ENCODE measurements at regions of chr16 and their contacts with region 1.

Region 1: GRCh38 chr16:48231727-48232492 is 12.2 kb upstream of the LONP2 start:
- DNase-seq: peak; percentile 72
- ATAC-seq: peak; percentile 83
- H3K4me3 Mint-ChIP-seq: peak overlapping the region; percentile 20
- H3K27ac Mint-ChIP-seq: peak overlapping the region; percentile 65
- H3K4me1 Mint-ChIP-seq: peaks cover 22% of the 10 kb centered on the region
- H3K27me3 Mint-ChIP-seq: peaks cover 5% of the 10 kb centered on the region

Region 2: DNA sequence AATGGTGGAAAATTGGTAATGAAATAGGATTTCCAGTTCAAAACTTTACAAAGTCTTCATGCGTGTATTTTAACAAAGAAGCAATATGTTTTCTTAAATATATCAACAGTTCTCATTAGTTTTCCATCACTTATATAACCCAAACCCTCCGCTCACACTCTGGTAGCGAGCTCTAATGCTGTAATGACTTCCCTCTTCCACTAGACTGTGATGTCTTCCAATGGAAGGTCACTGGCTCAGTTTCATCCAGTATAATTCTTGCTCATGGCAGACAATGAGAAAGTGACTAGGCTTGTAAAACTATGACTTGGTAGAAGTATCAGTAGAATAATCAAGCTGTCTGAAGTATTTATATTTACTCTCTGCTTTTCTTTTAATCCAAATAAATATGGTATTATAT is 1121.0 kb before region 1 on chr16:
- CTCF ChIA-PET with region 1: no interaction called
- POLR2A ChIA-PET with region 1: no interaction called
- intact Hi-C with region 1: loop called in 1 of 2 experiments (anchors 10 kb)
- DNase-seq: no peak
- ATAC-seq: no peak
- H3K4me3 Mint-ChIP-seq: no peak overlapping the region
- H3K27ac Mint-ChIP-seq: no peak overlapping the region
- H3K4me1 Mint-ChIP-seq: peaks cover 23% of the 10 kb centered on the region
- H3K27me3 Mint-ChIP-seq: peaks cover 3% of the 10 kb centered on the region

Region 3: GRCh38 chr16:48123104-48123788 is 108.7 kb before region 1 on chr16:
- CTCF ChIA-PET with region 1: no interaction called
- POLR2A ChIA-PET with region 1: no interaction called
- intact Hi-C with region 1: loop called in 1 of 2 experiments (anchors 5 kb)
- DNase-seq: peak; percentile 82
- ATAC-seq: peak; percentile 93
- H3K4me3 Mint-ChIP-seq: no peak overlapping the region
- H3K27ac Mint-ChIP-seq: no peak overlapping the region
- H3K4me1 Mint-ChIP-seq: peaks cover 20% of the 10 kb centered on the region
- H3K27me3 Mint-ChIP-seq: peaks cover 23% of the 10 kb centered on the region

Region 4: GRCh38 chr16:48168075-48168474 is 63.8 kb before region 1 on chr16:
- CTCF ChIA-PET with region 1: no interaction called
- POLR2A ChIA-PET with region 1: no interaction called
- intact Hi-C with region 1: no loop called
- DNase-seq: no peak
- ATAC-seq: no peak
- H3K4me3 Mint-ChIP-seq: no peak overlapping the region
- H3K27ac Mint-ChIP-seq: no peak overlapping the region
- H3K4me1 Mint-ChIP-seq: peaks cover 4% of the 10 kb centered on the region
- H3K27me3 Mint-ChIP-seq: peaks cover 8% of the 10 kb centered on the region

Region 5: GRCh38 chr16:48244080-48244862 is 12.4 kb after region 1 on chr16 and contains the start of gene LONP2:
- CTCF ChIA-PET with region 1: interaction called, 4 read pairs
- POLR2A ChIA-PET with region 1: no interaction called
- intact Hi-C with region 1: loop called in 1 of 2 experiments (anchors 1 kb)
- DNase-seq: peak; percentile 95
- ATAC-seq: peak; percentile 94
- H3K4me3 Mint-ChIP-seq: peak within 1 kb of the TSS; percentile 91
- H3K27ac Mint-ChIP-seq: peak within 1 kb of the TSS; percentile 88
- H3K4me1 Mint-ChIP-seq: peaks cover 36% of the 10 kb centered on the region
- H3K27me3 Mint-ChIP-seq: no peaks in the 10 kb centered on the region
- total RNA-seq, gene LONP2: 60.3 to 63.2 TPM

Region 6: GRCh38 chr16:48459167-48459566 is 227.3 kb after region 1 on chr16:
- CTCF ChIA-PET with region 1: no interaction called
- POLR2A ChIA-PET with region 1: no interaction called
- intact Hi-C with region 1: loop called in 1 of 2 experiments (anchors 5 kb)
- DNase-seq: no peak
- ATAC-seq: no peak
- H3K4me3 Mint-ChIP-seq: no peak overlapping the region
- H3K27ac Mint-ChIP-seq: no peak overlapping the region
- H3K4me1 Mint-ChIP-seq: peaks cover 9% of the 10 kb centered on the region
- H3K27me3 Mint-ChIP-seq: peaks cover 35% of the 10 kb centered on the region

Region 7: DNA sequence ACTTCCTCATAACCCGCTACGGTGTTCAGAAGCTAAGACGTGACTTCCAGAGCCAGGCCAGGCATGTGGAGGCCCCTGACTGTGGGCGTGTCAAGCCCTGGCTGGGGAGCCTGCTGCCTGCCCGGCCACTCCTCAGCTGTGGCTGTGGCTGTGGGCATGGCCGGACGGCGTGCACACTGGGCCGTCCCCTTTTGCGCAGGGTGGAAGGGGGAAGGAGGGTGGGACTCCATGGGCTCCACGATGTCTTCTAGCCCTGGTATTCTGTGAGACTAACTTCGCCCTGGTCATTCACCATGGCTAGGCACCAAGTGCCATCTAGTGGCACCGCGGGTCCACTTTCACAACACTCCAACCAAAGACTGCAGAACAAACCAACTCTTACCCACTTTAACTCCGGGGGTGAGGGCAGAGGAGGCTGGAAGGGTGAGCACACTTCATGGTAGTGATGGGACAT is 310.1 kb after region 1 on chr16:
- CTCF ChIA-PET with region 1: interaction called, 3 read pairs
- POLR2A ChIA-PET with region 1: no interaction called
- intact Hi-C with region 1: loop called in 1 of 2 experiments (anchors 5 kb)
- DNase-seq: peak; percentile 47
- ATAC-seq: peak; percentile 56
- H3K4me3 Mint-ChIP-seq: no peak overlapping the region
- H3K27ac Mint-ChIP-seq: no peak overlapping the region
- H3K4me1 Mint-ChIP-seq: peaks cover 10% of the 10 kb centered on the region
- H3K27me3 Mint-ChIP-seq: no peaks in the 10 kb centered on the region

Measured in activated CD4-positive, alpha-beta T cell treated with anti-CD3 and anti-CD28 coated beads for 36 hours (primary cell).